HEK293 (cell line): ENCODE measurements at regions of chr5 and their contacts with region 1.

Region 1: GRCh38 chr5:115544436-115545350 is at the start of gene FEM1C:
- H3K4me3 ChIP-seq: peak within 1 kb of the TSS; percentile 87
- H3K27ac ChIP-seq: peak within 1 kb of the TSS; percentile 95
- H3K4me1 ChIP-seq: no peaks in the 10 kb centered on the region; the same call in 1 of the 2 replicates
- CTCF ChIP-seq: peak; percentile 16; the same call in 1 of the 2 replicates

Region 2: DNA sequence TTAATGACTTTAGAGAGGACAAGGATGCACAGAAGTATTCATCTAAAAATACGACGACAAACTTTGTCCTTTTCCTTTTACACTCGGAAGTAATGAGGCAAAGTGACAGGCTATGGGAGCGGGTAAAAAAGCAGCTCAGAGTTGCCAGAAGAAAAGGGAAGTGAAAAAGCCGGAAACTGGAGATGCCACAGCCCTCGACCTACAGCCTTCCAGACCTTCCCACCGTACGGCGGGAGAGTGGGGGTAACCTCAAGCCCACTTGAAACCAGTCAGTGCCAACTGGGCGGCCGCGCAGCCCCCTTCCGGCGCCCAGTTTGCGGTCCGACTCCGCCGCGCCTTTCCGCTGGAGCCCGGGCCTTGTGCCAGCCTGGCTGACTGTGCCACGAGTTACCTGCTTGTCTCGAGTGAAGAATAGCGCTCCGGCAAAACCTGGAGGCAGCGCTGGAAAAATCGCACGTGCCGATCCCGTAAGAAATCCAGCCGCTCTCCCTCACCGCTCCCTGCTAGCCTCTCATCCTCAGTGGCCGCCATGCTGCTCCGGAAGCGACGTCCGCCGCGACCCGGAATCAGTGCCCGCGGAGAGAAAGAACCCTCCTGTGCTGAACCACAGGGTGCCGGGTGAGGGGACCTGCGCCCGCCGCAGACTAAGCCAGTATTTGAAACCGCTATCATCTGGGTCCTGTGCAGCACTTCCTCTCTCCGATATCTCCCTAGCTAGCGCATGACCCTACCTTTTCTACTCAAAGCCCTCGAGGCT is 282.2 kb before region 1 on chr5 and contains the start of gene PGGT1B:
- CTCF ChIA-PET with region 1: interaction called, 3 read pairs
- POLR2A ChIA-PET with region 1: interaction called, 10 read pairs
- H3K4me3 ChIP-seq: peak within 1 kb of the TSS; percentile 76
- H3K27ac ChIP-seq: peak within 1 kb of the TSS; percentile 65
- H3K4me1 ChIP-seq: peaks cover 15% of the 10 kb centered on the region
- CTCF ChIP-seq: peak; percentile 65; the same call in 1 of the 2 replicates

Region 3: DNA sequence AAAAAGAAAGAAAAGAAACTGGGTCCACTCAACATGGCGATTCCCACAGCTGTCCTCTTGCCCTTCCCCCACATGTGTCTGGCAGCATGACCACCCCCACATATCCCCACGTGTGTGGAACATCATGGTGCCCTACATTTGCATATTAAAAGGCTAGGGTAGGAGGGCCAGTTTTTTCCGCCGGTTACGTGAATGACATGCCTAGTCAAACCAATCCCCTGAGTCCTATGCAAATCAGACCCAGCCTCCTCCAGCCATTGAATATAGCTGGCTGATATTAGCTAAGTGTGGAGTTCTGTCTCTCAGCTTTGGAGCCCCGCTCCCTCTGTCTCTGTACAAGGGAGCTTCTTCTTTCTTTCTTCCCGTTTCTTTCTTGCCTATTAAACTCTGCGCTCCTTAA is 215.2 kb before region 1 on chr5:
- CTCF ChIA-PET with region 1: no interaction called
- POLR2A ChIA-PET with region 1: no interaction called
- H3K4me3 ChIP-seq: no peak overlapping the region
- H3K27ac ChIP-seq: no peak overlapping the region
- H3K4me1 ChIP-seq: no peaks in the 10 kb centered on the region
- CTCF ChIP-seq: no peak

Region 4: DNA sequence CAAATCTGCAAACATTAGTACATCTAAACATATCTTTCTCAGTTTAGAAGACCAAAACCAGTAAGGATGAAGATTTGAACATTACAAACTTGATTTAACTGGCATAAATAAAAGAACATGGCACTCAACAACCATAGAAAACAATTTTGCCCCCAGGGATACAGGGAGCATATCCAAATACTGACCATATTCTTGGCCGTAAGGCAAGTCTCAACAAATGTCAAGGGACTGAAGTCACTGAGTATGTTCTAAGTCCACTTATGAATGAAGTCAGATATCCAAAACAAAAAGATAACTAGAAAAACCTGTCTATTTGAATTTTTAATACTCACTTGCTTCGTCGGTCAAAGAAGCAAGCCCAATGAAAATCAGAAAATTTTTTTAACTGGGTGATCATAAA is 14.3 kb before region 1 on chr5:
- CTCF ChIA-PET with region 1: no interaction called
- POLR2A ChIA-PET with region 1: interaction called, 13 read pairs
- H3K4me3 ChIP-seq: no peak overlapping the region
- H3K27ac ChIP-seq: no peak overlapping the region
- H3K4me1 ChIP-seq: peaks cover 6% of the 10 kb centered on the region
- CTCF ChIP-seq: no peak

Region 5: DNA sequence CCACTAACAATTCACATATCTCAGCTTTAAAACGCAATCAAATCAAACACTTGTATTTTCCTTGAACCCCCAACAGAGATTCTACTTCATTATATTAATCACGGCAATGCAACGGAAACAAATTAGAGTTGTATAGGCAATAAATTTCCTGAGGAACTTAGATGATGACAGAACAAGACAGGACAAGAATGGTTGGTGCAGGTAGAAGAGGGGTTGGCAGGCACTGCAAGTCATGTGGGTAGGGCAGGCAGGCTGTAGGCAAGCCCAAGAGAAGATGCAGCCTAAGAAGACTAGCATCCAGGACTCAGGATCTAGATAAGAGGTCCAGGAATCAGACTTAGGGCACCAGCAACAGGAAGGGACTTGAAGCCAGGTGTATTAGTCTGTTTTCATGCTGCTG is 16.5 kb after region 1 on chr5:
- CTCF ChIA-PET with region 1: no interaction called
- POLR2A ChIA-PET with region 1: no interaction called
- H3K4me3 ChIP-seq: no peak overlapping the region
- H3K27ac ChIP-seq: no peak overlapping the region
- H3K4me1 ChIP-seq: no peaks in the 10 kb centered on the region
- CTCF ChIP-seq: no peak

Region 6: DNA sequence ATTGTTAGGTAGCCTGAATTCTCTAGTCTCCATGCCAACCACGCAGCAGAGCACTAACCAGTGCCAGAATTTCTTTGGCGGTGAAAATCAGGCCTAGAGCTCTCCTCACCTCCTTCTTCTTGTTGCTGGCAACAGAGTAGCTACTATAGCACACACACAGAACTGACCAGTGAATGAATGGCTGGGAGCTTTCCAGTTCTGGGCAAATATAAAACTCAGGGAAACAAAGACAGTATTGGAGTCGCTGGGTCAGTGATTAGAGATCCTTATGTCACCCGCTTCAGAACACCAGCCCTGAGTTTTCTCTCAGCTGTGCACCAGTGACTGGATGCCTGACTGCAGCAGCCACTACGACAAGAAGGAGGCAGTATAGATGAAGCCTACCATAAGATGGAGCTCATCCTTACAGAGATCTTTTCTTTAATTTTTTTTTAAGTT is 26.8 kb after region 1 on chr5:
- CTCF ChIA-PET with region 1: interaction called, 11 read pairs
- POLR2A ChIA-PET with region 1: interaction called, 12 read pairs
- H3K4me3 ChIP-seq: no peak overlapping the region
- H3K27ac ChIP-seq: no peak overlapping the region
- H3K4me1 ChIP-seq: no peaks in the 10 kb centered on the region
- CTCF ChIP-seq: no peak

Region 7: GRCh38 chr5:115579747-115580173 is 35.1 kb after region 1 on chr5:
- CTCF ChIA-PET with region 1: interaction called, 11 read pairs
- POLR2A ChIA-PET with region 1: interaction called, 3 read pairs
- H3K4me3 ChIP-seq: no peak overlapping the region
- H3K27ac ChIP-seq: no peak overlapping the region
- H3K4me1 ChIP-seq: no peaks in the 10 kb centered on the region
- CTCF ChIP-seq: no peak

Region 8: DNA sequence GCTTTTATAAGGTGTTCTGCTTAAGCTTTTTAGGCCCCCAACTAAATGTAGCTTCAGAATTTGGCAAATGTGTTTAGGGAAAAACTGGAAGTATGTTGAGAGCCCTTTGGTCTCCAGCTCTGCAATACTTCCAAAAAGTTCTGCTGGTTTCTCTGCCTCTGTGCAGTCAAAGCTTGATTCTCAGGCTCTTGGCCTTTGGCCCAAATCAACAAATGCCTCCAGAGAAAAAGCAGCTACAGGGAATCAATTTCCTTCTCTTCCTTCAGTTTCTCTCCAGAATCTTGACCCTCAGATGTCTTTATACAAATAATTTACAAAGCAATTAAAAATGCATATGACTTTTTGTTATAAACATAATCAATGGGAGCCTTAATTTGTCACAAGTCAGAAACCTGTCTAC is 775.8 kb after region 1 on chr5:
- CTCF ChIA-PET with region 1: no interaction called
- POLR2A ChIA-PET with region 1: no interaction called
- H3K4me3 ChIP-seq: no peak overlapping the region
- H3K27ac ChIP-seq: no peak overlapping the region
- H3K4me1 ChIP-seq: no peaks in the 10 kb centered on the region; the same call in 1 of the 2 replicates
- CTCF ChIP-seq: no peak